CD4-positive, alpha-beta T cell (primary cell): ENCODE measurements at regions of chr3 and their contacts with region 1.

Region 1: GRCh38 chr3:13657660-13658435 is 108.9 kb downstream of the FBLN2 start:
- DNase-seq: peak; percentile 56 to 87 (median 68)
- ATAC-seq: peak; percentile 87
- H3K4me3 ChIP-seq: no peak overlapping the region
- H3K4me3 Mint-ChIP-seq: no peak overlapping the region
- H3K27ac ChIP-seq: no peak overlapping the region
- H3K27ac Mint-ChIP-seq: no peak overlapping the region
- H3K4me1 ChIP-seq: peaks cover 39% of the 10 kb centered on the region
- H3K4me1 Mint-ChIP-seq: peaks cover 28% of the 10 kb centered on the region
- H3K27me3 ChIP-seq: peaks cover 2 to 4% of the 10 kb centered on the region in 2 experiments
- H3K27me3 Mint-ChIP-seq: peaks cover 7% of the 10 kb centered on the region
- CTCF ChIP-seq: peak; percentile 76

Region 2: DNA sequence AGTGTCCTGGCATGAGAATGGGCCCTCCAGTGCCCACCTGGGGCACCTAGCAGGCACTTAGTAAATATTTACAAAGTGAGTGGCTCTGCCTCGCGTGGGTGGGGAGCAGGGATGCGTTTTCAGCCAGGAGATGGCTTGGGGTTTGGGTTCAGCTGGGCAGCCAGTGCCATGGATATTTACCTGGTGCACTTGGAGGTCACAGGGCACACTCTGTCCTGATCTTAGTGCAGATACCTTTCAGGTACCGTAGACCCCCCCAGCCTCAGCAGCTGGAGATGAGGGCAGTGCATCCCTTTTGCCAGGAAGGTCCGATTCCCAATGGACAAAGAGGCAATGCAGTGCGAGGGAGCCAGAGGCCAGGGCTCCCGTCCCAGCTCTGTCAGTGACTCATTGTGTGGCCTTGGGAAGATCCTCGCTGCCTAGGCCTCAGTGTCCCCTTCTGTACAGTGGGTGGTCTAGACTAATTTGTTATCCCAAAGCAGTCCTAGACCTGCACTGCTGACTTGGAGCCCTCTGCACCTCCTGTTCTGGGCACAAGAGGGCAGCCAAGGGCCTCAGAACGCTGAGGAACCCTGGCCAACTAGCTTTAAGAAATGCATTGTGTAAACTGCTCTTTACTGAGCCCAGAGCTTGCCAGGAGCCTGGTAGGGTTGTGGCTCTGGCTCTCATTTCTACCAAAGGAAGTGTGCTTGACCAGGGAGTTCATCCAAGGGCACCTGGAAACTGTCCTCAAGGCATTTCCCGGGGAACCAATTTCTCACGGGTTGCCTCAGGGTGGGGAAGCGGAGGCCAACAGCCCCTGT is 161.7 kb before region 1 on chr3:
- CTCF ChIA-PET with region 1: interaction called, 27 read pairs
- POLR2A ChIA-PET with region 1: no interaction called
- intact Hi-C with region 1: no loop called
- DNase-seq: peak; percentile 48 to 81 (median 60)
- ATAC-seq: peak; percentile 100
- H3K4me3 ChIP-seq: no peak overlapping the region
- H3K4me3 Mint-ChIP-seq: no peak overlapping the region
- H3K27ac ChIP-seq: no peak overlapping the region
- H3K27ac Mint-ChIP-seq: no peak overlapping the region
- H3K4me1 ChIP-seq: no peaks in the 10 kb centered on the region
- H3K4me1 Mint-ChIP-seq: no peaks in the 10 kb centered on the region
- H3K27me3 ChIP-seq: no peaks in the 10 kb centered on the region
- H3K27me3 Mint-ChIP-seq: no peaks in the 10 kb centered on the region
- CTCF ChIP-seq: peak; percentile 91

Region 3: GRCh38 chr3:13612829-13613228 is 45.0 kb before region 1 on chr3:
- CTCF ChIA-PET with region 1: no interaction called
- POLR2A ChIA-PET with region 1: no interaction called
- intact Hi-C with region 1: no loop called
- DNase-seq: no peak
- ATAC-seq: no peak
- H3K4me3 ChIP-seq: no peak overlapping the region
- H3K4me3 Mint-ChIP-seq: no peak overlapping the region
- H3K27ac ChIP-seq: no peak overlapping the region
- H3K27ac Mint-ChIP-seq: no peak overlapping the region
- H3K4me1 ChIP-seq: no peaks in the 10 kb centered on the region
- H3K4me1 Mint-ChIP-seq: no peaks in the 10 kb centered on the region
- H3K27me3 ChIP-seq: no peaks in the 10 kb centered on the region
- H3K27me3 Mint-ChIP-seq: no peaks in the 10 kb centered on the region
- CTCF ChIP-seq: no peak

Region 4: GRCh38 chr3:15205934-15206661 is 1548.2 kb after region 1 on chr3 and contains the start of gene CAPN7:
- CTCF ChIA-PET with region 1: no interaction called
- POLR2A ChIA-PET with region 1: no interaction called
- intact Hi-C with region 1: no loop called
- DNase-seq: peak; percentile 84 to 99 (median 94)
- ATAC-seq: peak; percentile 89
- H3K4me3 ChIP-seq: peak within 1 kb of the TSS; percentile 84
- H3K4me3 Mint-ChIP-seq: peak within 1 kb of the TSS; percentile 92
- H3K27ac ChIP-seq: peak within 1 kb of the TSS; percentile 69 to 86
- H3K27ac Mint-ChIP-seq: peak within 1 kb of the TSS; percentile 93
- H3K4me1 ChIP-seq: peaks cover 21% of the 10 kb centered on the region
- H3K4me1 Mint-ChIP-seq: peaks cover 43% of the 10 kb centered on the region
- H3K27me3 ChIP-seq: no peaks in the 10 kb centered on the region
- H3K27me3 Mint-ChIP-seq: no peaks in the 10 kb centered on the region
- CTCF ChIP-seq: no peak
- total RNA-seq, gene CAPN7: 64.7 to 69.4 TPM